MCF 10A (cell line): ENCODE measurements at regions of chr1 and their contacts with region 1.

Region 1: GRCh38 chr1:234610348-234611152 is 572 bp upstream of the IRF2BP2 start:
- DNase-seq: peak; percentile 96
- H3K4me3 Mint-ChIP-seq: peak overlapping the region; percentile 95
- H3K27ac Mint-ChIP-seq: peak overlapping the region; percentile 95
- H3K4me1 Mint-ChIP-seq: peaks cover 51% of the 10 kb centered on the region
- H3K27me3 Mint-ChIP-seq: no peaks in the 10 kb centered on the region
- CTCF ChIP-seq: no peak

Region 2: GRCh38 chr1:234400773-234401172 is 209.8 kb before region 1 on chr1:
- CTCF ChIA-PET with region 1: no interaction called
- POLR2A ChIA-PET with region 1: no interaction called
- intact Hi-C with region 1: no loop called
- DNase-seq: no peak
- H3K4me3 Mint-ChIP-seq: no peak overlapping the region
- H3K27ac Mint-ChIP-seq: peak overlapping the region; percentile 61
- H3K4me1 Mint-ChIP-seq: peaks cover 23% of the 10 kb centered on the region
- H3K27me3 Mint-ChIP-seq: no peaks in the 10 kb centered on the region
- CTCF ChIP-seq: no peak

Region 3: DNA sequence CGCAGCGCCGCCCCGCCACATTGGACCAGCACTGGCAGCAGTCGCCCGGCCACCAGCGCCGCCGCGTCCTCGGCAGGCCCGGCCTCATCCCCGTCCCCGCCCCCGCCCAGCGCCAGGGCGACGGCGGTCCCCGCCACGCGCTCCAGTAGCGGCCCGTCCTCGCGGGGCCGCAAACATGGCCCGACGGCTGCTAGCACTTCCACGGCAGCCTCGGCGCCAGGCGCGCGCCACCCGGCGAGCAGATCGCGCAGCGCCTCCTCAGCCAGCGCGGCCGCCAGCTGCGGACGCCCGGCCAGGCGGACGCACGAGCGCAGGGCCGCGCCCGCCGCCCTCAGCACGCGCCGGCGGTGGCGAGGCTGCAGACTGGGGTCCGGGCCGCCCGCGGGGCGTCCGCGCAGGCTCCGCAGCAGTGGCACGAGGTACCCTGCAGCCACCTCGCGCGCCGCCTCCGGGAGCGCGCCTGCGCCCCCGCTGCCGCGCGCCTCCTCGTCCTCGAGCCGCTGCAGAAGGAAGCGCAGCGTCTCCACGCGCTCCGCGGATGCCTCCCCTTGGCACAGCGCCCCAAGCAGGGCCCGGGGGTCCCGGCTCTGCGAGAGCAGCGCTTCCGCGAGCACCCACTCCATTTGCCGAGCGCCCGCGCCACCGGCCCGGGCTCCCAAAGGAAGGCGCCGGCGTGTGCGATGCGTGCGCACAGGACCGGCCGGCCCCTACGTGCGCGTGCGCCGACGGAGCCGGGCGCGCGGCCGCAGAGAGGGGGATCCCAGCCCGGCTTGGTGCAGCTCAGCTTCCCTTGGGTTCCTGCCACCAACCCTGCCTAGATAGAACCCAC is 131.9 kb before region 1 on chr1 and contains the start of gene TARBP1:
- CTCF ChIA-PET with region 1: interaction called, 3 read pairs
- POLR2A ChIA-PET with region 1: interaction called, 63 read pairs
- intact Hi-C with region 1: no loop called
- DNase-seq: peak; percentile 89
- H3K4me3 Mint-ChIP-seq: peak within 1 kb of the TSS; percentile 77
- H3K27ac Mint-ChIP-seq: no peak within 1 kb of the TSS
- H3K4me1 Mint-ChIP-seq: peaks cover 31% of the 10 kb centered on the region
- H3K27me3 Mint-ChIP-seq: peaks cover 23% of the 10 kb centered on the region
- CTCF ChIP-seq: no peak
- total RNA-seq, gene TARBP1: 45.5 and 52.5 TPM in 2 replicates

Region 4: DNA sequence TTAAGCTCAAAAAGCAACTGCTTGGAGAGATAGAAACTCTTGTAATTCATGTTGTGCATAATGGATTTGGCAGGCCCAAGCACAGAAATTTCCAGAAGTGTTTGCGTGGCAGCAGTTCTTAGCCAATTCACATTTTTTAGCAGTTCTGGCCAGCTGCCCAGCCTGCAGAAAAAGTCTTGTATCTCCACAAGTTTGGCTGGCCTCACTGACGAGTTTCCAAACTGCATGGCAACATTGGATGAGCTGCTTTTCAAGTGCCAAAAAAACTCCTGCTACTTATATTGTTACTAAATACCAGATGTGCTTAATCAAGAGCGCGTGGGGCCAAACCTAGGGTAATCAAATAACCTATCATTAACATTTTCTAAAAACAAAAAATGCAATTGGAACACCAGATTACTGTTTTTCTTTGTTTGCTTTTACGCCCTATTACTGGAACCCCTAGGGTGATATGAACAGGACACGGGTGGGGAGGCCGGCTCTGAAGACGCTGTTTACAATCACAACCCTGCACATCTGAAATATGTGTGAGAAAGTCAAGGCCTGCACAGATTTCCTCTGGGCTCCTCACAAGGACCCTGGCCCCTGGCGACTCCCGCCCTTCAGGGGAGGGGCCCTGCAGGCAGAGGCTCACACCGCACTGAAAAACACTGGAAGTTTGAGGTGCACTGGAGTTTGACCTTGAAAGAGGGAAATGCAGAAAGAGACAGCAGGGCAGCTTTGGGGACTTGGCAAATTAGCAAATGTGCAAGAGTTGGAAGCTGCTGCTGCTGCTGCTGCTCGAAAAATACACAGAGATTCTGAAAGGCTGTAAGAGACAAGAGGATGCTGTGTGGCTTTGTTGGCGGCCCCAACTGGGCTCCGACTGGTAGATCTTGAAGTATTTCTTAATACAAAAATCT is 76.3 kb before region 1 on chr1:
- CTCF ChIA-PET with region 1: interaction called, 13 read pairs
- POLR2A ChIA-PET with region 1: interaction called, 467 read pairs
- intact Hi-C with region 1: no loop called
- DNase-seq: peak; percentile 100
- H3K4me3 Mint-ChIP-seq: peak overlapping the region; percentile 31
- H3K27ac Mint-ChIP-seq: peak overlapping the region; percentile 93
- H3K4me1 Mint-ChIP-seq: peaks cover 43% of the 10 kb centered on the region
- H3K27me3 Mint-ChIP-seq: no peaks in the 10 kb centered on the region
- CTCF ChIP-seq: no peak

Region 5: GRCh38 chr1:234645474-234645953 is 35.0 kb after region 1 on chr1:
- CTCF ChIA-PET with region 1: no interaction called
- POLR2A ChIA-PET with region 1: interaction called, 61 read pairs
- intact Hi-C with region 1: no loop called
- DNase-seq: no peak
- H3K4me3 Mint-ChIP-seq: no peak overlapping the region
- H3K27ac Mint-ChIP-seq: no peak overlapping the region
- H3K4me1 Mint-ChIP-seq: peaks cover 16% of the 10 kb centered on the region
- H3K27me3 Mint-ChIP-seq: no peaks in the 10 kb centered on the region
- CTCF ChIP-seq: no peak

Region 6: GRCh38 chr1:234722904-234723720 is 112.6 kb after region 1 on chr1:
- CTCF ChIA-PET with region 1: interaction called, 76 read pairs
- POLR2A ChIA-PET with region 1: interaction called, 563 read pairs
- intact Hi-C with region 1: loop called (anchors 1 kb)
- DNase-seq: peak; percentile 99
- H3K4me3 Mint-ChIP-seq: peak overlapping the region; percentile 61
- H3K27ac Mint-ChIP-seq: peak overlapping the region; percentile 96
- H3K4me1 Mint-ChIP-seq: peaks cover 77% of the 10 kb centered on the region
- H3K27me3 Mint-ChIP-seq: no peaks in the 10 kb centered on the region
- CTCF ChIP-seq: no peak

Region 7: GRCh38 chr1:234978397-234979295 is 368.1 kb after region 1 on chr1:
- CTCF ChIA-PET with region 1: no interaction called
- POLR2A ChIA-PET with region 1: interaction called, 7 read pairs
- intact Hi-C with region 1: loop called (anchors 5 kb)
- DNase-seq: peak; percentile 68
- H3K4me3 Mint-ChIP-seq: peak overlapping the region; percentile 20
- H3K27ac Mint-ChIP-seq: peak overlapping the region; percentile 96
- H3K4me1 Mint-ChIP-seq: peaks cover 50% of the 10 kb centered on the region
- H3K27me3 Mint-ChIP-seq: no peaks in the 10 kb centered on the region
- CTCF ChIP-seq: no peak

Region 8: GRCh38 chr1:235067263-235068172 is 457.0 kb after region 1 on chr1:
- CTCF ChIA-PET with region 1: interaction called, 18 read pairs
- POLR2A ChIA-PET with region 1: interaction called, 406 read pairs
- intact Hi-C with region 1: no loop called
- DNase-seq: peak; percentile 100
- H3K4me3 Mint-ChIP-seq: peak overlapping the region; percentile 54
- H3K27ac Mint-ChIP-seq: peak overlapping the region; percentile 97
- H3K4me1 Mint-ChIP-seq: peaks cover 53% of the 10 kb centered on the region
- H3K27me3 Mint-ChIP-seq: no peaks in the 10 kb centered on the region
- CTCF ChIP-seq: no peak